Endothelial cell of umbilical vein (primary cell): ENCODE measurements at regions of chr10 and their contacts with region 1.

Region 1: DNA sequence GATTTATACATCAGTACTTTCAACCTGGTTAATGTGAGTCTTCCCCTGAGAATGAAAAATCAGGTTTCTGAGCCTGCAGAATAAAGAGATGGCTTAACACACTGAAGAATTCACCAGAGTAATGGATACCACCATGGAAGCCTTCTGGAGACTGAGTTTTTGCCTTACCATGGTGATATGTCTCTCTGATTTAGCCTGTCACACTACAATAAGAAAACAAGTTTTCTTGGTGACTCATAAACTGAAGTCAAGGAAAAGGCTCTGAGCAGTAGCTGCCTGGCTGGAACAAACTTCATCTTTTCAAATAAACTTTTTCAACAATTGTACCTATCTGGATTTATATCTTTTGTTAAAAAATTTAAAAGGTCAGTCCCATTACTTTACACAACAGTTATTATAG is 229.0 kb downstream of the PRPF18 start:
- DNase-seq: peak; percentile 77
- H3K4me3 ChIP-seq: no peak overlapping the region
- H3K27ac ChIP-seq: peak overlapping the region; percentile 19
- H3K4me1 ChIP-seq: peaks cover 49% of the 10 kb centered on the region
- H3K27me3 ChIP-seq: no peaks in the 10 kb centered on the region
- CTCF ChIP-seq: no peak
- POLR2A ChIP-seq: no peak

Region 2: DNA sequence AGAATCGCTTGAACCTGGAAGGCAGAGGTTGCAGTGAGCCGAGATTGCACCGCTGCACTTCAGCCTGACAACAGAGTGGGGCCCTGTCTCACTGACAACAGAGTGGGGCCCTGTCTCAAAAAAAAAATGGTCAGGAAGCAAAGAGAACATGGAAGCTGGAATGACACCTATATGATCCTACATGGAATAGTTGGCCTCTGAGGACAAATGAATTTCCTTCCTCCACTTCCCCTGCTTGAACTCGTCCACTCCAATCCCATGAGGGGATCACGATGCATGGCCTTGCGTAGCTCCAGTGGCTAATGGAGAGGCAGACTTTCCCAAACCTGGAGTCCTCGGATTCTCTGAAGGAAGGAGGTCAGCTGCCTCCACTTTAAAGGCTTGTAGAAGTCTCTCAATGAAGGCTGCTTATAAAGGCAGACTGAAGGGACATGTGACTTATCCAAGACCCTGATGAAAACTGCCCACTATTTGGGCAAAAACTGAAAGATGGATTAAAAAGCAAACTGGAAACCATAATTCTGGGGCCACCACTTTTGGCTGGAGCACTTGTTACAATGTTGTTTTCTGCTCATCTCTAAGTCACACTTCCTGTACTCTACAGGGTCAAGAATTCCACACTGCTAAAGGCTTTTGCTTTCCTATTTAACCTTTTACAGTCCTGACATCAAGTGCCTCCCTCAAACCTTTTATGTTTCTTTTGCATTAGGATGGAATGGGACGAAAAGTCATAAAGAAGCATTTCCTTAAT is 14.4 kb before region 1 on chr10:
- CTCF ChIA-PET with region 1: interaction called, 5 read pairs
- POLR2A ChIA-PET with region 1: no interaction called
- dilution Hi-C with region 1: no loop called
- intact Hi-C with region 1: loop called (anchors 2 kb)
- DNase-seq: no peak
- H3K4me3 ChIP-seq: no peak overlapping the region
- H3K27ac ChIP-seq: no peak overlapping the region
- H3K4me1 ChIP-seq: peaks cover 39% of the 10 kb centered on the region
- H3K27me3 ChIP-seq: no peaks in the 10 kb centered on the region
- CTCF ChIP-seq: no peak
- POLR2A ChIP-seq: no peak